ENCODE measurements at regions of chr9 and their contacts with region 1.

Region 1: GRCh38 chr9:37913480-37914153 is 9.7 kb upstream of the SLC25A51 start:
- DNase-seq: no peak
- H3K4me3 ChIP-seq: no peak overlapping the region
- CTCF ChIP-seq: peak; percentile 85

Region 2: GRCh38 chr9:37449862-37450632 is 463.6 kb before region 1 on chr9:
- CTCF ChIA-PET with region 1: no interaction called
- POLR2A ChIA-PET with region 1: no interaction called
- DNase-seq: no peak
- H3K4me3 ChIP-seq: no peak overlapping the region
- CTCF ChIP-seq: no peak

Region 3: DNA sequence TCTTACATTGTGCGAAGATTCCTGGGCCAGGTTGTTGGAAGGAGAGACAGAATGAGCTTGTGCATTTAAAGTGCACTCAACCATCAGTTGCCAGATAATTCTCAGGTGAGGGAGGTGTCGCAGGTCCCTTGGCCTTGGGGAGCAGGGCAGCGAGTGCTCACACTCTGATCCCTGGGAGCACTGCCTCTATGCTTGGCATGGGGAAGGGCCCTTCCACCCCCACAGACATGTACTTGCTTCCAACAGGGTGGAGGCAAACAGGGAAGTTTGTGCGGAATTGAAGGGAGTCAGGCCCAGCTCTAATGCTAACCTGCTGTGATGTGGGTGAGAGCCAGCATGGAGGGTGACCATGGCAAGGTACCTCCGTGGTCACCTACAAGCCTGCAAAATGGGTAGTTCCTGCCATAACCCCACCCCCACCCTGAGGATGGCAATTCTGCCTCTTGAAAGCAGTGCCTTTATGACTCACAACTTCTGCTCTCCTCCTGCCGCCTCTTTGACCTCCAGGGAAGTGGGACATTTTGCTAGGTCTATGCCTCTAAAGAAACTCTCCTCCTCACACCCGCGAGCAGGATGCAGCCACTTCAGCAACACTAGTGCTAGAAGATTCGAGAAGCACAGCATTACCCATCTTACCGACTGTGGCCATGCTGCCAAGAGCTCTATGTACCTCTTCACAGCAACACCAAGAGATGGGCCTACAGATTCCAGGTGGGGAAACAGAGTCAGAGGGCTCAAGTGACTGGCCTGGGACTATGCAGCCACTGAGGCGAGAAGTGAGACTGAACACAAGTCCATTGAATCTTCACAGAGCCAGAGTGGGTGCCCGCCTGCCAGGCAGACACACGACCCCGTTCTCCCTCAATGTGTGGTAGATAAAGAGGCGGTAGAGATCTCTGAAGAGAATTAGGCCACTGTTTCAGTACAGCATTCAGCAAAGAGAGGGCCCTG is 12.4 kb after region 1 on chr9:
- CTCF ChIA-PET with region 1: interaction called, 44 read pairs
- POLR2A ChIA-PET with region 1: no interaction called
- DNase-seq: no peak
- H3K4me3 ChIP-seq: no peak overlapping the region
- CTCF ChIP-seq: no peak

Region 4: DNA sequence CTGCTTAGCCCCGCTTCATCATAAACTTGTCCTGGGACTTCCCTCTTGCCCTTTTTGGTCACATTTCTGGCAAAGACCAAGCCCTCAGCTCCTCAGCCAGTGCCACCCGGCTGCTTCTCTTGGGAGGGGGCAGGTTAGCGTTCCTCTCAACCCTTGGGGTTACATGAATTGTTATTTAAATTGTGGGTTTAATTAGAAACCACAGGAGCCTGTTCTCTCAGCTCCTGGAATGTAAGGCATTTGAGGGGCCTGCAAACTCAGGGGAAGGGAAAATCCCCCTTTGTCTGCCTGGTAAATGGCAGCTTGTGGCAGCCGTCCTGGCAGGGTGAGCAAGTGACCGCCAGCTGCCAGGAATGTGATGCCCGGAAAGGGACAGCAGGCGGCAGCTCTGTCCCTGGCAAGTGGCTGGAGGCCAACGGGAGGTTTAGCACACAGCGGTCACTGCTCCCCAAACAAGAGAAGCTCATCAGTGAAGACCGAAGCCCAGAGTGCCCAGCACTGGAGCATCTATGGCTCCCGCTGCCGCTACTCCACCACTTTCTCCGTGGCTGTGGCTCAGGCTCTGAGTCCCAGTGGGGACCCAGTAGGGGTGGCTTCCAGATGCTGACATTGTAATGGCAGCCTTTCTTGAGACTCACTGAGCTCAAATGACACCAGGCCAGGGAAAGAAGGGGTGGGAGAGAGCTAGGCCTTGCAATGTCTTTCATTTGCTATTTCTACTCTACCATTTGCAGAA is 103.7 kb after region 1 on chr9:
- CTCF ChIA-PET with region 1: interaction called, 24 read pairs
- POLR2A ChIA-PET with region 1: interaction called, 3 read pairs
- DNase-seq: no peak
- H3K4me3 ChIP-seq: no peak overlapping the region; the same call in none of the 2 replicates
- CTCF ChIP-seq: peak; percentile 45

Region 5: GRCh38 chr9:38068866-38069629 is 155.4 kb after region 1 on chr9 and contains the start of gene SHB:
- CTCF ChIA-PET with region 1: interaction called, 37 read pairs
- POLR2A ChIA-PET with region 1: interaction called, 6 read pairs
- DNase-seq: no peak
- H3K4me3 ChIP-seq: peak within 1 kb of the TSS; percentile 85
- CTCF ChIP-seq: no peak

Region 6: DNA sequence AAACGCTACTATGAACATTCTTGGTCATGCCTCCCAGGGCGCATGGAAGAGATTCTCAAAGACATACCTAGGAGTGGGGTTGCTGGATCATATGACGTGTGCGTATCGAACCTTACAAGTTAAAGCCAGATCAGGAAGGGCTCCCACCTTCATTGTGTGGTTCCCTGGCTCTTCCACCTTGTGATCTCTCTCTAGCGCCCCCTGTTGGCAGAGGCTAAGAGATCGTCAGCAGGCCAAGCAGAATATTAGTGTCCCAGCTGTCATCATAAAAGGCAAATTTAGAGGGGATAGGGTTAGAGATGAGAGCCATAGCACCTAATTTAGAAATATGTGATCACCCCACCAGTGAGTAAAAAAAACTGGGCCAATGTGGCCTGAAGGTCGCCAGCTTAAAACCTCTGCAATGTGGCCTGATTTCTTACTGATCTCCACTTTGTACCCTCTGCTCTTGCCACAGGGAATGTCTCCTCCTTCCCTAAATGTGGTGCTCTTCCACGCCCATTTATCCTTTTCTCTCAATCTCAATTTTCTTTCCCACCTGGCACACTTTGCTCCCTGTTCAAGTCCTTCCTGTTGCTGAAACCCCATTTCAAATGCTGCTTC is 247.1 kb after region 1 on chr9:
- CTCF ChIA-PET with region 1: interaction called, 77 read pairs
- POLR2A ChIA-PET with region 1: no interaction called
- DNase-seq: no peak
- H3K4me3 ChIP-seq: no peak overlapping the region
- CTCF ChIP-seq: peak; percentile 90

Region 7: GRCh38 chr9:38362852-38363593 is 449.4 kb after region 1 on chr9:
- CTCF ChIA-PET with region 1: interaction called, 17 read pairs
- POLR2A ChIA-PET with region 1: no interaction called
- DNase-seq: no peak
- H3K4me3 ChIP-seq: no peak overlapping the region
- CTCF ChIP-seq: peak; percentile 59